ENCODE measurements at regions of chr5 and their contacts with region 1.

Region 1: DNA sequence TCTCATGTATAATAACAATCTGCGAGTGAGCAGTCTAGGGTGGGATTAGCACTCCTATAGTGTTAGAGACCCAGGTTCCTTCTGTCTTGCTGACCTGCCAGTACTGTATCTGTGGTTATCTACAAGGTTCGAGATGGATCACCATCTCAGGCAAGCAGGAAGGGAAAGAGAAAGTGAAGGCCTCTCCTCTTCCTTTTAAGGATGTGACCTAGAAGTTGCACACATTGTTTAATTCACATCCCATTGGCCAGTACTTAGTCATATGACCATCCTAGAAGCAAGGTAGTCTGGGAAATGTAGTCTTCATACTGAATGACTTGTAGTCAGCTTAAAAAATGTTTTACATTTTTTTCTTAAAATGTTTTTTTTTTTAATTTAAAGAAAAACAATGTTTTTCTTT is 168.6 kb downstream of the CARTPT start:
- DNase-seq: no peak
- H3K4me3 ChIP-seq: no peak overlapping the region
- H3K27ac ChIP-seq: no peak overlapping the region
- H3K4me1 ChIP-seq: no peaks in the 10 kb centered on the region
- H3K27me3 ChIP-seq: no peaks in the 10 kb centered on the region
- CTCF ChIP-seq: no peak
- POLR2A ChIP-seq: no peak

Region 2: GRCh38 chr5:71830681-71831539 is 56.8 kb before region 1 on chr5:
- intact Hi-C with region 1: loop called (anchors 10 kb)
- DNase-seq: peak; percentile 62
- H3K4me3 ChIP-seq: no peak overlapping the region
- H3K27ac ChIP-seq: no peak overlapping the region
- H3K4me1 ChIP-seq: no peaks in the 10 kb centered on the region
- H3K27me3 ChIP-seq: no peaks in the 10 kb centered on the region
- CTCF ChIP-seq: no peak
- POLR2A ChIP-seq: no peak

Region 3: DNA sequence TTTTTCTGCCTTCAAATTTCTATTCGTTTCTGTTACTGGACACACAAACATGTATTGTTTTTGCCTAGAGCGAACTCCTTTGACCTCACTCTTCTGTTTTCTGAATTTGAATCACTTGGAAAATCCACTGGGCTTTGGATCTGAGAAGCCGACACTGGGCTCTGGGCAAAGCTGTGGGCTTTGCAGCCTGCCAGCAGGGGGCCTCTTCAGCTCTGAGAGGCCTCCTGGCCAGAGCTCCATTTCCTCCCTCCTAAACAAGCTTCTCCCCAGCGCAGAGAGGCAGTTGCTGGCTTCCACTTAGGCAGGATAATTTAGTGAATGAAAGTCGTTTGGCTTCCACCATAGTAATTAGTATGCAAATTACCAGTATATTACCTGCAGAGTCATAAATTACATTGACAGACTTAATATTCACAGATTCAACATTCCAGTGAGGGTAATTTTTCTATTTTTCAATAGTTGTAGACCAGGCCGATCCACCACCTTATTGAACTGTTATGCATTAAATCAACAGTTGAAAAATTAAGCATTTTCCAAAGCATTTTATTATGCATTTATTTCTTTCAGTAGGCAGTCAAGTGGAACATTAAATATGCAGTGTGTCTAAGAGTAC is 723.5 kb after region 1 on chr5:
- intact Hi-C with region 1: no loop called
- DNase-seq: peak; percentile 62
- H3K4me3 ChIP-seq: no peak overlapping the region
- H3K27ac ChIP-seq: no peak overlapping the region
- H3K4me1 ChIP-seq: no peaks in the 10 kb centered on the region
- H3K27me3 ChIP-seq: no peaks in the 10 kb centered on the region
- CTCF ChIP-seq: peak; percentile 54 to 78 (median 76)
- POLR2A ChIP-seq: no peak

Measured in prostate gland (tissue), 2 donors.